Activated CD4-positive, alpha-beta memory T cell treated with anti-CD3 and anti-CD28 coated beads for 36 hours (primary cell): ENCODE measurements at regions of chr15 and their contacts with region 1.

Region 1: GRCh38 chr15:74842581-74843444 is at the start of gene ULK3:
- DNase-seq: peak; percentile 95
- H3K4me3 Mint-ChIP-seq: peak within 1 kb of the TSS; percentile 92
- H3K27ac Mint-ChIP-seq: peak within 1 kb of the TSS; percentile 93
- H3K4me1 Mint-ChIP-seq: peaks cover 44% of the 10 kb centered on the region
- H3K27me3 Mint-ChIP-seq: no peaks in the 10 kb centered on the region
- total RNA-seq, gene ULK3: 51.4 to 57.6 TPM

Region 2: GRCh38 chr15:74519311-74519710 is 323.5 kb before region 1 on chr15:
- CTCF ChIA-PET with region 1: no interaction called
- POLR2A ChIA-PET with region 1: no interaction called
- intact Hi-C with region 1: no loop called
- DNase-seq: no peak
- H3K4me3 Mint-ChIP-seq: no peak overlapping the region
- H3K27ac Mint-ChIP-seq: no peak overlapping the region
- H3K4me1 Mint-ChIP-seq: peaks cover 3% of the 10 kb centered on the region
- H3K27me3 Mint-ChIP-seq: no peaks in the 10 kb centered on the region

Region 3: GRCh38 chr15:74608786-74609185 is 234.0 kb before region 1 on chr15:
- CTCF ChIA-PET with region 1: no interaction called
- POLR2A ChIA-PET with region 1: no interaction called
- intact Hi-C with region 1: no loop called
- DNase-seq: no peak
- H3K4me3 Mint-ChIP-seq: no peak overlapping the region
- H3K27ac Mint-ChIP-seq: no peak overlapping the region
- H3K4me1 Mint-ChIP-seq: no peaks in the 10 kb centered on the region
- H3K27me3 Mint-ChIP-seq: no peaks in the 10 kb centered on the region

Region 4: GRCh38 chr15:74889883-74890664 is 47.3 kb after region 1 on chr15 and contains the start of gene MPI:
- CTCF ChIA-PET with region 1: no interaction called
- POLR2A ChIA-PET with region 1: interaction called, 6 read pairs
- intact Hi-C with region 1: loop called (anchors 5 kb)
- DNase-seq: peak; percentile 93
- H3K4me3 Mint-ChIP-seq: peak within 1 kb of the TSS; percentile 90
- H3K27ac Mint-ChIP-seq: peak within 1 kb of the TSS; percentile 76
- H3K4me1 Mint-ChIP-seq: peaks cover 44% of the 10 kb centered on the region
- H3K27me3 Mint-ChIP-seq: no peaks in the 10 kb centered on the region
- total RNA-seq, gene MPI: 56.4 to 60.0 TPM